HCT116 (cell line): ENCODE measurements at regions of chr17 and their contacts with region 1.

Region 1: GRCh38 chr17:29124117-29124924 is 55.9 kb downstream of the MYO18A start:
- DNase-seq: no peak
- ATAC-seq: peak; percentile 91
- H3K4me3 ChIP-seq: no peak overlapping the region
- H3K27ac ChIP-seq: no peak overlapping the region; the same call in 1 of the 2 replicates
- H3K4me1 ChIP-seq: peaks cover 14 to 21% of the 10 kb centered on the region in 2 experiments; a peak in 3 of 4 replicates
- H3K27me3 ChIP-seq: no peaks in the 10 kb centered on the region
- CTCF ChIP-seq: peak; percentile 66 to 92 (median 78)
- POLR2A ChIP-seq: no peak
- RAD21 ChIP-seq: peak; percentile 95

Region 2: DNA sequence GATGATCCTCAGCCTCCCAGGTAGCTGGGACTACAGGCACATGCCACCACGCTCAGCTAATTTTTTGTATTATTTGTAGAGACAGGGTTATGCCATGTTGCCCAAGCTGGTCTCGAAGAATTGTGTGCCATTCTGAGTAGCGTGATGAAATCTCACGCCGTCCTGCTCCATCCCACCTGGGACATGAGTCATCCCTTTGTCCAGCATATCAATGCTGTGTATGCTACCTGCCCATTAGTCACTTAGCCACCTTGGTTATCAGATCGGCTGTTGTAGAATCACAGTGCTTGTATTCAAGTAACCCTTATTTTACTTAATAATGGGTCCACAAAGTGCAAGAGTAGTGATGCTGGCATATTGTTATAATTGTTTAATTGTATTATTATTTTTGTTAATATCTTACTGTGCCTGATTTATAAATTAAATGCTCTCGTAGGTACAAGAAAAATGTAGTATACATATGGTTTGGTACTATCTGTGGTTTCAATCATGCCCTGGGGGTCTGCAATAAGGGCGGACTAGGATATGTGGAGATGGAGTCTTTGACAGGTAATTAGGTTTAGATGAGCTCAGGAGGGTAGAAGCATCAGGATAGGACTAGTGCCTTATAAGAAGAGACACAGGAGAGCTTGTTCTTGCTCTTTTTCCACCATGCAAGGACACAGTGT is 677.5 kb before region 1 on chr17:
- CTCF ChIA-PET with region 1: no interaction called
- POLR2A ChIA-PET with region 1: no interaction called
- RAD21 ChIA-PET with region 1: no interaction called
- intact Hi-C with region 1: no loop called
- DNase-seq: no peak
- ATAC-seq: no peak
- H3K4me3 ChIP-seq: no peak overlapping the region
- H3K27ac ChIP-seq: no peak overlapping the region
- H3K4me1 ChIP-seq: no peaks in the 10 kb centered on the region
- H3K27me3 ChIP-seq: no peaks in the 10 kb centered on the region
- CTCF ChIP-seq: no peak
- POLR2A ChIP-seq: no peak
- RAD21 ChIP-seq: no peak

Region 3: DNA sequence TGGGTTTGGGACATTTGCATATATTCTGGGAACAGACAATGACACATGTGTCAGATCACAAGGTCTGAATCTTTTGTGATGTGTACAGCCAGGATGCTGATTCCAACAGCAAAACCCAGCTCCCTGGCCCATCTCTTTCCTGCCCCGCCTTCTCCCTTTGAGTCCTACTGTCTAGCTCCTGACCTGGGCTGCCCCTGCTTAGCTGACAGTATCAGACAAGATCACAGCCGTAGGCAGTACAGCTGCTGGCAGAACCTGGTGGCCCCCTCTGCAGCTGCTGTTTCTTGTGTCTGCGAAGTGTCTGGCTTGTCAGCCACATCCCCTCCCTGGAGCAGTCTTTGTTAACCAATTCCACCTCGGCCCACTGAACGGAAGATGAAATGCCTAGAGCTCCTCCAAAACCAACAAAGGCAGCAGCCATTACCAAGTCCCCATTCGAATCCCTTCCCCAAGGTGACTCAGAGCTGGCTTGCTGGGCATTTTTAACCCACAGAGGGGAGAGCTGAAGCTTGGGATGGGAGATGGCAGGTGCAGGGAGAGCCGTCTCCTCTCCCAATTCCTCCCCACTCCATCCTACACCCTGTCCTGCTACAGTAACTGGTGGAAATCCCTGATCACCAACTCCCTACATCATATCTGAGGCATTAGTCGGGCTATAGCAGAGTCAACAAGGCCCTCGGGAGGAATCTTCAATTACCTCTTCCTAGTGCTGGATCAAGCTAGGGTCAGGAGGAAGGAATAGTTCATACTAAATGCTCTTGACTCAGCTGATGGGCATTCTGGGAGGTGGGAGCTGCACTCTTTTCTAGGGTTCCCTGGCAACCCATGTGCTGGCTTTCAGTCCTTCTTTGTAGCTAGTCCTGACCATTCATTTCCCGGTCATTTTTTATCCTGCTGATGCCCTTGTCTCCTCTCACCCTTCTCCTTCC is 75.6 kb before region 1 on chr17:
- CTCF ChIA-PET with region 1: no interaction called
- POLR2A ChIA-PET with region 1: no interaction called
- RAD21 ChIA-PET with region 1: no interaction called
- intact Hi-C with region 1: no loop called
- DNase-seq: no peak
- ATAC-seq: no peak
- H3K4me3 ChIP-seq: no peak overlapping the region
- H3K27ac ChIP-seq: no peak overlapping the region
- H3K4me1 ChIP-seq: no peaks in the 10 kb centered on the region
- H3K27me3 ChIP-seq: peaks cover 9% of the 10 kb centered on the region; the same call in 1 of the 2 replicates
- CTCF ChIP-seq: no peak
- POLR2A ChIP-seq: no peak
- RAD21 ChIP-seq: no peak

Region 4: DNA sequence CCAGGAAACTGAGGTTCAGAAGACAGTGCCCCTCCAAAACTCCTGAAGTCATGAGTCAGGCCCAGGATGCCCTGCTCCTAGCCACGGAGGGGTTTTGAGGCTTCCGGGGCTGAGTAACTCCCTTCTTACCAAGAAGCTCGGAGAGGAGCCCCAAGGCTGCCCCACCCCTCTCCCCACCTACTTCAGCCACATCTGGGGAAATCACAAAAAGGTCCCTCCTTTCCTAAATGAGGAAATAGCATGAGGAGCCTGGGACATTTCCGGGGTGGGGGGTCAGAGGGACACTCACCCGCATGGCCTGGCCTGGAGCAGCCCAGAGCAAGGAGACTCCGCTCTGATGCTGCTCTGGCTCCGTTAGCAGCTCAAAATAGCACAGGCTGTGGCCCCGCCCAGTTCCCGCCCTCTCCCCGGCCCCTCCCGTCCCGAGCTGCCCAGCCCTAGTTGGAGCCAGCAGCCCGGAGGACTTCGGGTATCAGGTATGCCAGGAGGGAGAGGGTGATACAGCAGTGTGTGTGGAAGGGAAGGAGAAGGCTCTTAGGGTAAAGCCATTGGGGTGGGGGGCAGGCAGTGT is 15.8 kb after region 1 on chr17:
- CTCF ChIA-PET with region 1: interaction called, 110 read pairs
- POLR2A ChIA-PET with region 1: interaction called, 6 read pairs
- RAD21 ChIA-PET with region 1: interaction called, 20 to 22 read pairs
- intact Hi-C with region 1: loop called (anchors 1 kb)
- DNase-seq: no peak
- ATAC-seq: peak; percentile 62
- H3K4me3 ChIP-seq: no peak overlapping the region
- H3K27ac ChIP-seq: no peak overlapping the region
- H3K4me1 ChIP-seq: peaks cover 59 to 88% of the 10 kb centered on the region in 2 experiments
- H3K27me3 ChIP-seq: no peaks in the 10 kb centered on the region
- CTCF ChIP-seq: no peak
- POLR2A ChIP-seq: no peak
- RAD21 ChIP-seq: no peak

Region 5: DNA sequence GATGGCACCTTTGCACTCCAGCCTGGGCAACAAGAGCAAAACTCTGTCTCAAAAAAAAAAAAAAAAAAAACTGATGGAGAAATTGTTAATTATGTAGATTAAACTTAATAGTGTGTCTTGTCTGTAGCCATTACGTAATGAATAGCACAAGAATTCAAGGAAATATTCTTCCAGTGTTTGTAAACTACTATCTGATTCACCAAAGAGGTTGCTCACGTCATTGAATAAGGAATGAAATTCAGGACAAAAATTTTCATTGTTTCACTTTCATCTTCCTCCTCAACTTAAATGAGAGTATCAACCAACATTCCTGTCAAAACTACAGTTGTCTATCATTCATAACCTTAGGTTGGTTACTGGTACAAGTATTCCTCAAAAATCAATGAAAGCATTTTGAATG is 86.6 kb after region 1 on chr17:
- CTCF ChIA-PET with region 1: no interaction called
- POLR2A ChIA-PET with region 1: no interaction called
- RAD21 ChIA-PET with region 1: no interaction called
- intact Hi-C with region 1: no loop called
- DNase-seq: no peak
- ATAC-seq: no peak
- H3K4me3 ChIP-seq: no peak overlapping the region
- H3K27ac ChIP-seq: no peak overlapping the region
- H3K4me1 ChIP-seq: no peaks in the 10 kb centered on the region
- H3K27me3 ChIP-seq: no peaks in the 10 kb centered on the region
- CTCF ChIP-seq: no peak
- POLR2A ChIP-seq: no peak
- RAD21 ChIP-seq: no peak